Heart left ventricle (tissue), 16 donors: ENCODE measurements at regions of chr4 and their contacts with region 1.

Region 1: DNA sequence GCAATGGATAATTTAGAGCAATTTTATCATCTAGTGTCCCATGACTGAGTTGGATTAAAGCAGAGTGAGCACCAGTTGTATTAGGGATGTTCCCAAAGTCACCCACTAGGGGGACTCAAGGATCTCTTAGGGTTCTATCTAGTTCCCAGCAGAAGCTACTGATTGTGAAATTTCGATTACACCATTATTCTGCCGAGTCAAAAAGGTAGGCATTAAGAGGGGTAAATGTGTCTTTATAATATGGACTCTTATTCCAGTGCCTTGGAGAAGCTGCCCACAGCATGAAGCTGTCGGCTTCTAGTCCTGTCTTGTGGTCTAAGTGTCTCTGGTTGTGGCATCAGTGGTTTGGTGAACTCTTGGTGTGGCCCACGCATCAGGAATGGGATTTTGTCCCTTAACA is 53.3 kb downstream of the RGS12 start:
- DNase-seq: peak in 2 of 5 donors; percentile 56 to 63
- ATAC-seq: peak; percentile 88 to 95 (median 90)
- H3K4me3 ChIP-seq: no peak overlapping the region
- H3K27ac ChIP-seq: no peak overlapping the region
- H3K4me1 ChIP-seq: peaks cover 0 to 16% (median 6%) of the 10 kb centered on the region in 12 donors
- H3K27me3 ChIP-seq: no peaks in the 10 kb centered on the region
- CTCF ChIP-seq: peak; percentile 83 to 95 (median 91)
- POLR2A ChIP-seq: no peak

Region 2: GRCh38 chr4:3106339-3107186 is 239.6 kb before region 1 on chr4:
- intact Hi-C with region 1: loop called in 1 of 10 experiments (anchors 10 kb)
- DNase-seq: peak; percentile 86 to 92 (median 86)
- ATAC-seq: peak; percentile 95 to 99 (median 98)
- H3K4me3 ChIP-seq: no peak overlapping the region
- H3K27ac ChIP-seq: peak overlapping the region in 7 of 12 donors; percentile 11 to 63 (median 39)
- H3K4me1 ChIP-seq: peaks cover 0 to 35% (median 22%) of the 10 kb centered on the region in 12 donors
- H3K27me3 ChIP-seq: no peaks in the 10 kb centered on the region
- CTCF ChIP-seq: peak; percentile 93 to 98 (median 98)
- POLR2A ChIP-seq: no peak

Region 3: DNA sequence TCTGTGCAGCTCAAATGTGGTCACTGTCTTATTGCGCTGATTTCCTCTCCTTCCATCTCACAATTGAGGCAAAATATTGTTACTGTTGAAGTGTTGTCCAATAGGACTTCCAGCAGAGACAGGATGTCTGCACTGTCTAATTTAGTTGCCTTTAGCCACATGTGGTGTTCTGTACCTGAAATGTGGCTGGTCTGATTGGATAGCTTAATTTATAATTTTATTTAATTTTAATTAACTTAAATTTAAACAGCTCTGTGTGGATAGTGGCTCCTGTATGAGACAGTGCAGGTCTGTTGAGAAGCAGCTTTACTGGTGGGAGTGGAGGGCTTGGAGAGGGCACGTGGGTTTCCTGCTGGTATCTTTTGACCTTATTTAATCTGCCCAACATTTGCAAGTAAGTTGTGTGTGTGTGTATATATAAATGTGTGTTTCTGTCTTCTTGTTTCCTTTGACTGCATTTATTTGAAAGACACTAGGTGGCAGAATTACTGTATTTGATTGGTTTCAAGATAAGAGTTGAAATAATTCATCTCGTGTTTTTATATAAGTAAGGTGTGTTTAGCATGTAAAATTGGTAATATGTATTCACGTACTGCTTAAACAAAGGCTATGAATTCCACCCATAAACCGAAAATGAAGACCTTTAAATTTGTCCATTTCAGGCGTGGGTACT is 152.5 kb before region 1 on chr4:
- intact Hi-C with region 1: loop called in 1 of 10 experiments (anchors 5 kb)
- DNase-seq: no peak
- ATAC-seq: no peak
- H3K4me3 ChIP-seq: no peak overlapping the region
- H3K27ac ChIP-seq: no peak overlapping the region
- H3K4me1 ChIP-seq: peaks cover 0 to 5% (median 0%) of the 10 kb centered on the region in 12 donors
- H3K27me3 ChIP-seq: no peaks in the 10 kb centered on the region
- CTCF ChIP-seq: peak in 9 of 12 donors; percentile 11 to 48 (median 25)
- POLR2A ChIP-seq: no peak

Region 4: DNA sequence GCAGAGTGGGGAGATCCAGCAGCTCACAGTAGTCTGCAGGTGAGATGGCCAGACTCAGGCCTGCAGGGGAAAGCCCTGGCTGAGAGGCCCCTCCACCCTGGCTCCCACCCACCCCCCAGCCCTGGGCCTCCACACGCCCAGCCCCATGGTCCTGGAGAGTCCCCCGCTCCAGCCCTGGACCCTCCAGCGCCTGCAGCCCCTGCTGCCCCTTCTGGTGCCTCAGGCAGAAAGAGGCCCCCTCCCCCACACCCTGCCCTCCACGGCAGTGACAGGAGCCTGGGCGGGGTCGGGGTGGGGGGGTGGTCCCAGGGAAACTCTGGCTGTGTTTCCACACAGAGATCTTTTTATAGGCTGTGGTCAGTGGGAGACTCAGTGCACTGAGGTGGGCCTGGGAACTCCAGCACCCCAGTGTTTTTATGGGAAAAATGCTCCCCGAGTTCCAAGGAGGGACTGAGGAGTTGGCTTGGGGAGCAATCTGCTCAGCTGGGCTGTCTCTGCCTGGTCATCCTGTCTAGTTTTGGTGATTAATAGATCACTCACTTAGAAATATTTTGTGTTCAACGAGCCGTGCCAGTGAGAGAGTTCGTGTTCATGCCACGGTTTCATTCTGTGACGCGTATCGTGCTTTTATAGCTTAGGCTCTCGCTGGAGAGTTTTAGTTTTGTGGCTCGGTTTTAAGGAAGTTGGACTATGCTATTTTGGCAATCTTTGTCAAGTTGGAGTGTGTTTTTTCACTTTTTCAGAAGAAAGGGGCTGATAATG is 42.5 kb after region 1 on chr4:
- intact Hi-C with region 1: loop called in 1 of 10 experiments (anchors 5 kb)
- DNase-seq: peak in 1 of 5 donors; percentile 65
- ATAC-seq: peak in 2 of 4 donors; percentile 8 to 35
- H3K4me3 ChIP-seq: peak overlapping the region in 10 of 12 donors; percentile 18 to 45 (median 40)
- H3K27ac ChIP-seq: peak overlapping the region; percentile 24 to 97 (median 65)
- H3K4me1 ChIP-seq: peaks cover 0 to 56% (median 33%) of the 10 kb centered on the region in 12 donors
- H3K27me3 ChIP-seq: no peaks in the 10 kb centered on the region
- CTCF ChIP-seq: no peak
- POLR2A ChIP-seq: no peak

Region 5: DNA sequence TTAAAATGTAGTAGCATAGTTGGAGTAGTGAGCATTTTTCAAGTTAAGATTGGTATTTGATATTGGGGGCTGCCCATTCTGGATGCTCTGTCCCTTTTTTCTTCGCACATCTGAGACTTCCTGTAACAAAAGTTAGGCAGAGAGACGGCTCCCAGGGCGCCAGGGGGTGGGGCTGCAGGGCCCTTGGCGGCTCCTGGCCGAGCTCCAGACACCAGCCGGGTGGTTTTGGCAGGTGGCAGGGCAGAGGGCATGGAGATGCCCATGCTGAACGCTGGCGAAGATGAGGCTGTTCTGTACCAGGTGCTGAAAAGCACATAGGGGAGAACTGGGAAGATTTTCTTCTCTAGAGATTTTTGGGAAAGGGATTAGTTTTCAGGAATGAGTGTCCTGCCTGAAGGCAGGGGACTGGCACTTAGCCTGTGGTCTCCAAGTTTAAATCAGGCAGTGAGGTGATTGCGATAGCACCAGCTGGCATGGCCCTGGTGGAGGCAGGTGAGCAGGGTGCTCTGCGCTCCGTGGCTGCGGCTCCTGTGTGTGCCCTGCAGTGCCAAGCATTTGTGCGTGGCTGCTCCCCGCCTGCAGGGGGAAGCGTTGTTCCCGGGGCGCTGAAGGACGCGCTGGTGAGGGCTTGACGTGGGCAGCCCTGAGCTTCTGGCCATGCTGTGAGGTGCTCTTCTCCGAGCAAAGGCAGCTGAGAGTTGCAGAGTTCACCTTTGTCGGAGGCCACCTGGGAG is 72.0 kb after region 1 on chr4:
- intact Hi-C with region 1: no loop called
- DNase-seq: peak in 2 of 5 donors; percentile 25 to 57
- ATAC-seq: peak in 1 of 4 donors; percentile 37
- H3K4me3 ChIP-seq: no peak overlapping the region
- H3K27ac ChIP-seq: no peak overlapping the region
- H3K4me1 ChIP-seq: peaks cover 0 to 5% (median 0%) of the 10 kb centered on the region in 12 donors
- H3K27me3 ChIP-seq: no peaks in the 10 kb centered on the region
- CTCF ChIP-seq: no peak
- POLR2A ChIP-seq: no peak

Region 6: GRCh38 chr4:3442959-3443749 is 97.0 kb after region 1 on chr4:
- intact Hi-C with region 1: loop called (anchors 1 to 2 kb)
- DNase-seq: peak in 2 of 5 donors; percentile 30 to 79
- ATAC-seq: peak; percentile 45 to 67 (median 56)
- H3K4me3 ChIP-seq: no peak overlapping the region
- H3K27ac ChIP-seq: no peak overlapping the region
- H3K4me1 ChIP-seq: peaks cover 0 to 7% (median 0%) of the 10 kb centered on the region in 12 donors
- H3K27me3 ChIP-seq: no peaks in the 10 kb centered on the region
- CTCF ChIP-seq: peak; percentile 90 to 99 (median 98)
- POLR2A ChIP-seq: no peak

Region 7: DNA sequence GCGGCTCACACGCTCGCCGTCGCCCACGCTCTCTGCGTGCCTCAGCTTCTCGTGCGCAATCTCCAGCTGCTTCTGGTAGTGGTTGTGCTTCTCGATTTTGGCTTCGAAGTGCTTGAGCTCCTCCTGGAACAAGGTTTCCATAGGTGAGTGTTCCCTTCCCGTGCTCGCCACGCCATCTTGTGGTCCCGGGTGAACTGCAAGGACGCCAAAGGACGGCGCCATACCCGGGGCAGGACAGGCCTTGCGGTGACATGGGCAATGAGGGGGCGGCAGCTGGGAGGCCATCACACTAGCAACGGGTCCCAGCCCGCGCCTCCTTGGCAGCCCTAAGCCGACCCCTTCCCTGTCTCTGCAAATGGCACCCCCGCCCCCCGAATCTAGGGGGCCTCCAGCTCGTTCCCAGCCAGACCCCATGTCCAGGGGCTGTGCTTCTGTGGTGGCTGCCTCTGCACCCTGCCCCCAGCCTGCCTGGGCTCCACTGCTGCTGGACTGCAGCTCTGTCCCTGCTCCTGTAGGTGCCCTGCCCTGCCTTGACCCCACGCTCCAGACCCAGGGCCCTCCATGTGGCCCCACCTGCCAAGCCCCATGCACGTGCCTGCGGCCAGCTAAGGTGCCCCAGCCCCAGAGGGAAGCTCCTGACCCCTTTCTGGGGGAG is 168.8 kb after region 1 on chr4:
- intact Hi-C with region 1: loop called in 1 of 10 experiments (anchors 10 kb)
- DNase-seq: peak in 3 of 5 donors; percentile 36 to 64 (median 37)
- ATAC-seq: peak in 3 of 4 donors; percentile 18 to 30 (median 19)
- H3K4me3 ChIP-seq: no peak overlapping the region
- H3K27ac ChIP-seq: peak overlapping the region in 1 of 12 donors; percentile 12
- H3K4me1 ChIP-seq: peaks cover 0 to 3% (median 0%) of the 10 kb centered on the region in 12 donors
- H3K27me3 ChIP-seq: no peaks in the 10 kb centered on the region
- CTCF ChIP-seq: peak in 9 of 12 donors; percentile 11 to 44 (median 29)
- POLR2A ChIP-seq: no peak